ENCODE measurements at regions of chr9 and their contacts with region 1.

Region 1: GRCh38 chr9:124420991-124421543 is 5.8 kb upstream of the PSMB7 start:
- DNase-seq: no peak
- ATAC-seq: no peak
- H3K4me3 ChIP-seq: no peak overlapping the region
- H3K27ac ChIP-seq: no peak overlapping the region
- H3K4me1 ChIP-seq: no peaks in the 10 kb centered on the region
- H3K27me3 ChIP-seq: no peaks in the 10 kb centered on the region
- CTCF ChIP-seq: no peak

Region 2: DNA sequence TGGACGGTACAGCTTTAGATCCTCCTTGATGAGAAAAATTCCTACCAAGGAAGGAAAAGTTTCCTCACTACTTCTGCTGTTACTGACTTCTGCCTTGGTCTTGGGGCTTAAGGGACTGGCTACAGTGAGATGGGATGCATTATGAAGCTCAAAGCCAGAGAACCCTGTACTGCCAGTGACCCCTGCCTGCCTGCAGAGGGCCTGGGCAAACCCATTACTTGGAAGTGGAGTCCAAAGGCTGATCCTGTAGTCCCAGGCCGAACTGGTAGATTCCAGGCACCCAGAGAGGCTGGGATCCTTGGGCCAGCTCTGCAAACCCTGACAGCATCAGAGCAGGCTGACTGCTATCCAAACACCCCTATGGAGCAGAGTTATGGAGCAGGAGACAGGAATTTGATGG is 111.8 kb after region 1 on chr9:
- intact Hi-C with region 1: loop called in 1 of 3 experiments (anchors 5 kb)
- DNase-seq: no peak
- ATAC-seq: no peak
- H3K4me3 ChIP-seq: no peak overlapping the region
- H3K27ac ChIP-seq: no peak overlapping the region
- H3K4me1 ChIP-seq: no peaks in the 10 kb centered on the region
- H3K27me3 ChIP-seq: no peaks in the 10 kb centered on the region
- CTCF ChIP-seq: no peak